Right cardiac atrium (tissue), 5 donors: ENCODE measurements at regions of chr5 and their contacts with region 1.

Region 1: GRCh38 chr5:81425569-81425968 is 31.6 kb upstream of the ACOT12 start:
- DNase-seq: no peak
- ATAC-seq: peak; percentile 56 to 67
- H3K4me3 ChIP-seq: no peak overlapping the region
- H3K27ac ChIP-seq: no peak overlapping the region
- H3K4me1 ChIP-seq: no peaks in the 10 kb centered on the region
- H3K27me3 ChIP-seq: no peaks in the 10 kb centered on the region

Region 2: GRCh38 chr5:81639556-81639955 is 214.0 kb after region 1 on chr5:
- intact Hi-C with region 1: no loop called
- DNase-seq: no peak
- ATAC-seq: no peak
- H3K4me3 ChIP-seq: no peak overlapping the region
- H3K27ac ChIP-seq: no peak overlapping the region
- H3K4me1 ChIP-seq: no peaks in the 10 kb centered on the region
- H3K27me3 ChIP-seq: no peaks in the 10 kb centered on the region

Region 3: GRCh38 chr5:82165740-82166530 is 740.4 kb after region 1 on chr5:
- intact Hi-C with region 1: loop called in 3 of 4 experiments (anchors 5 to 10 kb)
- DNase-seq: peak; percentile 69 to 84 (median 73)
- ATAC-seq: peak; percentile 99 to 100
- H3K4me3 ChIP-seq: no peak overlapping the region
- H3K27ac ChIP-seq: no peak overlapping the region
- H3K4me1 ChIP-seq: peaks cover 3% of the 10 kb centered on the region
- H3K27me3 ChIP-seq: no peaks in the 10 kb centered on the region

Region 4: DNA sequence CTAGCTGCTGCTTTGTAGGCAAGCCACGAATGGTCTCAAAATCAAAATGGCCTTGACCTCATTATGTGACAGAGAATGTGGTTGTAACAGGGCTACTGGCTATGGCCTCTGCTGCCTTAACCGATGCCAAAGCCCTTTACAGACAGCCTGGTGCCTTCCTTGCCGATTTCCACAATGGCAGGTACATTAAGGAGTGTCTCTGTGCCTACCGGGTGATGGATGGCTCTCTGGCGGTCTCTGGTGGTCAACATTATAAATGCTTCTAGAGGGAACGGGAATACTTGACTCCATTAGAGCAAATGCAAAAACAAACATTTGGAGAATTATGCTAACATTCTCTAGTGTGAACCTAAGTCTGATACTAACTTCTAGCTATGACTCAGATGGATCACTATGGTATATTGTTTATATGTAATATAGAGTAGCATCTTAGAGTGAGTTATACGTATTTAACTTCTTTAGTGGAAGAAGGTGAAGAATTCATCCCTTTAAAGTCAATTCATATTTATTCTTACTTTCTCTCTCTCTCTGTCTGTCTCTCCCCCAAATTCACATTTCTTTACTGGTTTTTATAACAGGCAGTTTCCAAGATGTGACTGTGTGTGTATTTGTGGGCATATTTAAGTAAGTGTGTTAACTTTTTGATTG is 800.1 kb after region 1 on chr5:
- intact Hi-C with region 1: loop called in 1 of 4 experiments (anchors 5 kb)
- DNase-seq: peak; percentile 17 to 56 (median 55)
- ATAC-seq: peak; percentile 68 to 78
- H3K4me3 ChIP-seq: no peak overlapping the region
- H3K27ac ChIP-seq: no peak overlapping the region
- H3K4me1 ChIP-seq: peaks cover 2% of the 10 kb centered on the region
- H3K27me3 ChIP-seq: no peaks in the 10 kb centered on the region

Region 5: DNA sequence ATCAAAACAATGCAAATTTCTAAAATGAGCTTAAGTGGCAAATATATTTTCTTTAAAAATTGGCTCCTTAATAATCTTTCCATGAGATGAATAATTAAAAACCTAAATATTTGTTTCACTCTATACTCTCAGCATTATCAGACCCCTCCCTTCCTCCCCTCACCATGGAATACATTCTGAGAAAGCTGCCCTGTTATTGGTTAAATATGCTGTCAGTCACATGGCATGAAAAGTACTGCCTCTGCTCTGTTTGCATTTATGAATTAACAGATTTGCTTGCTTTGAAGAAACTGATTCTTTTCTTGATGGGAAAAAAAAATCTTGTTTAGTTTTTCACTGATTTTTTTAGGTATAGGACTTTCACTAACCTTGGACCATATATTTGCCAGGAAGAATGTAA is 869.6 kb after region 1 on chr5:
- intact Hi-C with region 1: no loop called
- DNase-seq: no peak
- ATAC-seq: no peak
- H3K4me3 ChIP-seq: no peak overlapping the region
- H3K27ac ChIP-seq: no peak overlapping the region
- H3K4me1 ChIP-seq: no peaks in the 10 kb centered on the region
- H3K27me3 ChIP-seq: no peaks in the 10 kb centered on the region